CD8-positive, alpha-beta T cell (primary cell): ENCODE measurements at regions of chr4 and their contacts with region 1.

Region 1: GRCh38 chr4:16176621-16177020 is 49.6 kb downstream of the TAPT1 start:
- DNase-seq: no peak
- ATAC-seq: no peak
- H3K4me3 ChIP-seq: no peak overlapping the region
- H3K4me3 Mint-ChIP-seq: no peak overlapping the region
- H3K27ac ChIP-seq: no peak overlapping the region
- H3K27ac Mint-ChIP-seq: no peak overlapping the region
- H3K4me1 ChIP-seq: no peaks in the 10 kb centered on the region
- H3K4me1 Mint-ChIP-seq: no peaks in the 10 kb centered on the region
- H3K27me3 ChIP-seq: no peaks in the 10 kb centered on the region
- H3K27me3 Mint-ChIP-seq: no peaks in the 10 kb centered on the region
- CTCF ChIP-seq: no peak

Region 2: DNA sequence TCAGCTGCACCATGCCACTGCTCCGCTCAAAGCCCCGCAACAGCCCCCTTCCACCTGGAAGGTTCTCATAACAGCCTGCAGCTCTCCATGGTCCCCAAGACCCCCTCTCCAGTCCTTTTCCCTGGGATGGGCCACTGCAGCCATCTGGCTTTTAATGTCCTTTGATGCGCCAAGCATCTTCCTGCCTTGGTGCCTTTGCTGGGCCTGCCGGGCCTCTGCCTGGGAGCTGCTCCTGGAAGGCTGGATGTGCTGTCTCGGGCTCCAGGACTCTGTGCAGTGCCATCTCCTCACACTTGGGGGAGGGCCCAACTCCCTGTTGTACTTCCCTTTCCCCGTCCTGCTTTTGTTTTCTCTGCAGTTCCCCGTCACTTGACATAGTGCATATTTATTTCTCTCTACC is 10.7 kb before region 1 on chr4:
- CTCF ChIA-PET with region 1: no interaction called
- POLR2A ChIA-PET with region 1: no interaction called
- intact Hi-C with region 1: loop called in 1 of 2 experiments (anchors 1 kb)
- DNase-seq: no peak
- ATAC-seq: no peak
- H3K4me3 ChIP-seq: no peak overlapping the region
- H3K4me3 Mint-ChIP-seq: no peak overlapping the region
- H3K27ac ChIP-seq: no peak overlapping the region
- H3K27ac Mint-ChIP-seq: no peak overlapping the region
- H3K4me1 ChIP-seq: no peaks in the 10 kb centered on the region
- H3K4me1 Mint-ChIP-seq: peaks cover 4% of the 10 kb centered on the region
- H3K27me3 ChIP-seq: no peaks in the 10 kb centered on the region
- H3K27me3 Mint-ChIP-seq: no peaks in the 10 kb centered on the region
- CTCF ChIP-seq: no peak

Region 3: GRCh38 chr4:16212138-16212782 is 35.6 kb after region 1 on chr4:
- CTCF ChIA-PET with region 1: no interaction called
- POLR2A ChIA-PET with region 1: no interaction called
- intact Hi-C with region 1: no loop called
- DNase-seq: no peak
- ATAC-seq: no peak
- H3K4me3 ChIP-seq: no peak overlapping the region
- H3K4me3 Mint-ChIP-seq: no peak overlapping the region
- H3K27ac ChIP-seq: no peak overlapping the region
- H3K27ac Mint-ChIP-seq: no peak overlapping the region
- H3K4me1 ChIP-seq: peaks cover 39% of the 10 kb centered on the region
- H3K4me1 Mint-ChIP-seq: peaks cover 66% of the 10 kb centered on the region
- H3K27me3 ChIP-seq: no peaks in the 10 kb centered on the region
- H3K27me3 Mint-ChIP-seq: no peaks in the 10 kb centered on the region
- CTCF ChIP-seq: no peak

Region 4: GRCh38 chr4:16253127-16253960 is 76.7 kb after region 1 on chr4:
- CTCF ChIA-PET with region 1: no interaction called
- POLR2A ChIA-PET with region 1: no interaction called
- intact Hi-C with region 1: no loop called
- DNase-seq: no peak
- ATAC-seq: no peak
- H3K4me3 ChIP-seq: no peak overlapping the region
- H3K4me3 Mint-ChIP-seq: no peak overlapping the region
- H3K27ac ChIP-seq: no peak overlapping the region
- H3K27ac Mint-ChIP-seq: no peak overlapping the region
- H3K4me1 ChIP-seq: no peaks in the 10 kb centered on the region
- H3K4me1 Mint-ChIP-seq: peaks cover 3% of the 10 kb centered on the region
- H3K27me3 ChIP-seq: no peaks in the 10 kb centered on the region
- H3K27me3 Mint-ChIP-seq: no peaks in the 10 kb centered on the region
- CTCF ChIP-seq: no peak

Region 5: GRCh38 chr4:16270454-16271328 is 94.1 kb after region 1 on chr4:
- CTCF ChIA-PET with region 1: no interaction called
- POLR2A ChIA-PET with region 1: no interaction called
- intact Hi-C with region 1: no loop called
- DNase-seq: no peak
- ATAC-seq: no peak
- H3K4me3 ChIP-seq: no peak overlapping the region
- H3K4me3 Mint-ChIP-seq: no peak overlapping the region
- H3K27ac ChIP-seq: no peak overlapping the region
- H3K27ac Mint-ChIP-seq: no peak overlapping the region
- H3K4me1 ChIP-seq: no peaks in the 10 kb centered on the region
- H3K4me1 Mint-ChIP-seq: peaks cover 7% of the 10 kb centered on the region
- H3K27me3 ChIP-seq: no peaks in the 10 kb centered on the region
- H3K27me3 Mint-ChIP-seq: no peaks in the 10 kb centered on the region
- CTCF ChIP-seq: no peak